Psoas muscle (tissue), 8 donors: ENCODE measurements at regions of chr14 and their contacts with region 1.

Region 1: GRCh38 chr14:102917469-102918211 is 4.8 kb upstream of the AMN start:
- DNase-seq: peak; percentile 57 to 76
- ATAC-seq: peak in 3 of 4 donors; percentile 53 to 76 (median 61)
- H3K4me3 ChIP-seq: no peak overlapping the region
- H3K27ac ChIP-seq: no peak overlapping the region
- H3K4me1 ChIP-seq: no peaks in the 10 kb centered on the region
- H3K27me3 ChIP-seq: peaks cover 0 to 13% (median 0%) of the 10 kb centered on the region in 3 donors
- CTCF ChIP-seq: peak; percentile 54

Region 2: DNA sequence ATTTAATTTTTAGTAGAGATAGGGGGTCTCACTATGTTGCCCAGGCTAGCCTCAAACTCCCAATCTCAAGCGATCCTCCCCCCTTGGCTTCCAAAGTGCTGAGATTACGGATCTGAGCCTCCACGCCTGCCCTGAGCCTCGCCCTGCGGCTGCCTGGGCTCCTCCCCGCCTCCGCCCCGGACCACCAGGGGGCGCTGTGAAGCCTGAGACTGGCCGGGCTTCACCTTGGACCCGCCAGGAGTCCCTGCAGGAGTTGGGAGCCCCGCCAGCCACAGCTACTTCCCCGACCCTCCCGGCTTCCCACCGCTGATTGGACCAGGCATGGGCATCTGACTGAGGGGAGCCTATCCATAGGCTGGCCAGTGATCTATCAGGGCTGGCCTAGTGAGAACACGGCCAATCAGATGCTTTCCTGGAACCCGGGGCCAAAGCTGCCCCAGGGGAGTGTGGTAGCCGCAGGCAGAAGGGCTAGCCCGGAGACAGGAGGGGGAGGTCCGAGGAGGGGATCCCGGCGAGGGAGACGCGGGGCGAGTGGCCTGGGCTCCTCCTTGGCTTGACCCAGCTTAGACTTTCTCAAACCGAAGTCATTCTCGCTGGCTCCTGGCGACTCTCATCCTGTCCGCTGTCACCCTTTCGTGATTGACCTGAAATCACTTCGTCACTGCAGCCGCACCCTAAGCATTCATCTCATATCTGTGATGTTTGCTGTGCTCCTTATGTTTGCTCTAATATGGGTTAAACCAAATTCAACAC is 393.0 kb before region 1 on chr14:
- intact Hi-C with region 1: loop called in 1 of 2 experiments (anchors 10 kb)
- DNase-seq: peak; percentile 98 to 99
- ATAC-seq: peak; percentile 96 to 98 (median 98)
- H3K4me3 ChIP-seq: peak overlapping the region; percentile 68
- H3K27ac ChIP-seq: peak overlapping the region; percentile 70
- H3K4me1 ChIP-seq: peaks cover 11% of the 10 kb centered on the region
- H3K27me3 ChIP-seq: no peaks in the 10 kb centered on the region
- CTCF ChIP-seq: peak; percentile 95

Region 3: GRCh38 chr14:102694530-102695166 is 223.0 kb before region 1 on chr14:
- intact Hi-C with region 1: loop called (anchors 2 to 5 kb)
- DNase-seq: no peak
- ATAC-seq: peak; percentile 60 to 82 (median 76)
- H3K4me3 ChIP-seq: no peak overlapping the region
- H3K27ac ChIP-seq: no peak overlapping the region
- H3K4me1 ChIP-seq: peaks cover 21% of the 10 kb centered on the region
- H3K27me3 ChIP-seq: no peaks in the 10 kb centered on the region
- CTCF ChIP-seq: peak; percentile 74

Region 4: DNA sequence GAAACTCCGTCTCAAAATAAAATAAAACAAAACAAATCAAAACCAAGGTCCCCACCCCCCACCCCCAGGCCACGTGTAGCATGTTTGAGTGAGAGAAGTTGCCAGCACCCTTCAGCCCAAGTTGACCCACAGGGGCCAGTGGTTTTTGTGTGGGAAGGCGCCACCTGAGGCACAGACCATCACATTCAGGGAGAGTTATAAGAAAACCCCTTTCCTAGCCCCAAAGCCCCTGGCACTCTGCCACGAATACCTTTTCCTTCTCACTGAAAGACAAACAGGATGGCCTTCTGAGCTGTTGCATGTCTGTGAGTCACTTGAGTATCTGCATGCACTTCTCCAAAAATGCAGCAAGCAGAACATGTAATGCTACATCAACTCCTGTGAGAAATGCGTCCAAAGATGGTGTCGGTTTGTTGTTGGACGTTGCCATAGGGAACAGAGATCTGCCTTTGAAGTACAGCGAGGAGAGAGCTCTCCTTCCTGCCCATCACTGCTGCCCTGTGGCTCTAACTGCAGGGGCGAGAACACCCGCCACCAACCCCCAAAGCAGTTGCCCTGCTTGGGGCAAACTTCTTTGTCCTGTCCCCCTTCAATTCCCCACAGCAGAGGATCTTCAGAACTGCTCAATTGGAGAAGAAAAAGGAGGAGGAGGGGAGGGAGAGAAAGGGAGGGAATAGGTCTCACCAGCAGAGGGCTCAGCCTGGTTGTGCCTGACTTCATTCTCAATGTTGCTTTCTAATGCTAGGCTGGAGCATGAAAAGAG is 143.1 kb before region 1 on chr14:
- intact Hi-C with region 1: loop called (anchors 2 to 10 kb)
- DNase-seq: no peak
- ATAC-seq: peak; percentile 58 to 76 (median 66)
- H3K4me3 ChIP-seq: no peak overlapping the region
- H3K27ac ChIP-seq: no peak overlapping the region
- H3K4me1 ChIP-seq: peaks cover 9% of the 10 kb centered on the region
- H3K27me3 ChIP-seq: no peaks in the 10 kb centered on the region
- CTCF ChIP-seq: peak; percentile 66

Region 5: GRCh38 chr14:102937331-102938175 is 19.9 kb after region 1 on chr14:
- intact Hi-C with region 1: no loop called
- DNase-seq: peak in 1 of 2 donors; percentile 24
- ATAC-seq: no peak
- H3K4me3 ChIP-seq: no peak overlapping the region
- H3K27ac ChIP-seq: no peak overlapping the region
- H3K4me1 ChIP-seq: no peaks in the 10 kb centered on the region
- H3K27me3 ChIP-seq: no peaks in the 10 kb centered on the region
- CTCF ChIP-seq: no peak

Region 6: GRCh38 chr14:102949801-102950451 is 32.3 kb after region 1 on chr14:
- intact Hi-C with region 1: loop called in 1 of 2 experiments (anchors 1 kb)
- DNase-seq: peak in 1 of 2 donors; percentile 81
- ATAC-seq: peak; percentile 35 to 69 (median 46)
- H3K4me3 ChIP-seq: no peak overlapping the region
- H3K27ac ChIP-seq: peak overlapping the region; percentile 93
- H3K4me1 ChIP-seq: peaks cover 17% of the 10 kb centered on the region
- H3K27me3 ChIP-seq: no peaks in the 10 kb centered on the region
- CTCF ChIP-seq: no peak

Region 7: DNA sequence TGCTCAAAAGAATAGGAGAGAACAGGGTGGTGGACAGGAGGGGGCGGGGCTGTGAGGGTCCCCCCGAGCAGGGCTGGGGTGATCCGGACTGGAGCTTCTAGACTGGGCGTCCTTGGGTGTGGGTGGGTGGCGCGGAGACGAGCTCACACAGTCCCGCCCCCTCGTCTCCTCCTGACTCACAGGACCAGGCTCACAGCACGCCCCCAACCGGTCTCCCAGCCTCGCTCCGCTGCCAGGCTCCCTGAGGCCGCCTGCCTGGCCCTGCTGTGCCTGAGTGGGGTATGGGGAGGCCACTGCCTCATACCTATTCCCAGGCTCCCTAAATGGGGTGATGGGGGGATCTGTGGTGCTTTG is 1190.6 kb after region 1 on chr14:
- intact Hi-C with region 1: no loop called
- DNase-seq: peak in 1 of 2 donors; percentile 28
- ATAC-seq: no peak
- H3K4me3 ChIP-seq: no peak overlapping the region
- H3K27ac ChIP-seq: no peak overlapping the region
- H3K4me1 ChIP-seq: no peaks in the 10 kb centered on the region
- H3K27me3 ChIP-seq: peaks cover 0 to 6% (median 0%) of the 10 kb centered on the region in 3 donors
- CTCF ChIP-seq: no peak